Transverse colon (tissue), 4 donors: ENCODE measurements at regions of chrX and their contacts with region 1.

Region 1: DNA sequence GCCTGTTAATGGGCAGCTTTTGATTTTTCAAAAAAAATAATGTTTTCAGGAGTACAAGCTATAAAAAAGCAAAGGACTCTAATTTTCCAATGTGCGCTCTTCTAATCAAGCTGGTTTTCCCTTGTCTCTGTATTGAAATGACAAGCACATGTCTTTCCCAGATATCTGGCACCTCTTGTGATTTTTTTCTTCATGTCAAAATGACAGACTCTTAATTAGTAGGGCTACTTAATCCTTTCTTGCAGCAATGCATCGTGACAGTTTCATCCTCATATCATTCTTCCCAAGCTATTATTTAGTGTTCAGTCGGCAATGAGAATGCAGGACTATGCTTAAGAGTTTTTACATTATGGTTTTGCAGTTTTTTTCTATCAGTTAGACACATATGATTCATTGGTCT is 139.5 kb downstream of the MAGEC1 start:
- DNase-seq: no peak
- H3K4me3 ChIP-seq: no peak overlapping the region
- H3K27ac ChIP-seq: no peak overlapping the region
- H3K4me1 ChIP-seq: no peaks in the 10 kb centered on the region
- H3K27me3 ChIP-seq: no peaks in the 10 kb centered on the region
- CTCF ChIP-seq: no peak
- EP300 ChIP-seq: no peak
- POLR2A ChIP-seq: no peak

Region 2: GRCh38 chrX:141199169-141199568 is 844.0 kb before region 1 on chrX:
- in situ Hi-C with region 1: no loop called
- intact Hi-C with region 1: no loop called
- DNase-seq: no peak
- H3K4me3 ChIP-seq: no peak overlapping the region
- H3K27ac ChIP-seq: no peak overlapping the region
- H3K4me1 ChIP-seq: no peaks in the 10 kb centered on the region
- H3K27me3 ChIP-seq: no peaks in the 10 kb centered on the region
- CTCF ChIP-seq: no peak
- EP300 ChIP-seq: no peak
- POLR2A ChIP-seq: no peak

Region 3: DNA sequence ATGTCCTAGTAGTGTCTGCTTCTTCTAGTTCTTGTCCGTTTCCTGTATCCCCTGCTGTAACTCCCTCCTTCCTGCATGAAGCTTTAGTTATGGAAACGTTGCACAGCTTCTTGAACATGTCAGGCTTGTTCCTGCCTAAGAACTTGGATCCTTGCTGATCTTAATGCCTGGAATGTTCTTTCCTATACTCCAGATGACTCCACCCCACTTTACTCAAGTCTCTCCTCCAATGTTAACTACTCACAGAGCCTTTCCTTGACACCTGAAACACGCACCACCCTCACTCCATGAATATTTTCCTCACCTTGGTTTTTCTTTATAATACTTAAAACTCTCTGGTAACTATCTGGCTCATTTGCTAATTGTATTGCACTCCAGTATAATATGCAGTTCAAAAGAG is 185.7 kb before region 1 on chrX:
- in situ Hi-C with region 1: no loop called
- intact Hi-C with region 1: no loop called
- DNase-seq: no peak
- H3K4me3 ChIP-seq: no peak overlapping the region
- H3K27ac ChIP-seq: no peak overlapping the region
- H3K4me1 ChIP-seq: no peaks in the 10 kb centered on the region
- H3K27me3 ChIP-seq: no peaks in the 10 kb centered on the region
- CTCF ChIP-seq: no peak
- EP300 ChIP-seq: no peak
- POLR2A ChIP-seq: no peak

Region 4: GRCh38 chrX:141924293-141924692 is 118.9 kb before region 1 on chrX:
- in situ Hi-C with region 1: no loop called
- intact Hi-C with region 1: no loop called
- DNase-seq: no peak
- H3K4me3 ChIP-seq: no peak overlapping the region
- H3K27ac ChIP-seq: no peak overlapping the region
- H3K4me1 ChIP-seq: no peaks in the 10 kb centered on the region
- H3K27me3 ChIP-seq: no peaks in the 10 kb centered on the region
- CTCF ChIP-seq: no peak
- EP300 ChIP-seq: no peak
- POLR2A ChIP-seq: no peak

Region 5: DNA sequence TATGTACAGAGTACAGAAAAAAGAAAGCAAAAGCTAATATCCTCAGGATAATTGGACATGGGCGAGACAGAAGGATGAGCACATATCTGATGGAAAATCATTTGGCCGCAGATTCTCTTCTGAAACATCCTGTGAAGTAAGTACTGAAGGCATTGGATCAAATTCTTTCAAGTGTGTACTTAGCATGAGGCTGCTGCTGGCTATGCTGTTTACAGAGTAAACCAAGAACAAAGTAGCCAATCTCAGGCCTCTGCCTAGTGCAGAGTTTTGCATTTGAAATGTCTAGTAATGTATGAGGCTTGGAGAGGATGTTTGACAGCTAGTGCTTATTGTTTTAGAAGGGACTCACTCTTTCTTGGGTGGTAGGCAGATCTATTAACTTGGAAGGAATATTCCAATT is 33.4 kb after region 1 on chrX:
- in situ Hi-C with region 1: no loop called
- intact Hi-C with region 1: no loop called
- DNase-seq: no peak
- H3K4me3 ChIP-seq: no peak overlapping the region
- H3K27ac ChIP-seq: no peak overlapping the region
- H3K4me1 ChIP-seq: no peaks in the 10 kb centered on the region
- H3K27me3 ChIP-seq: no peaks in the 10 kb centered on the region
- CTCF ChIP-seq: no peak
- EP300 ChIP-seq: no peak
- POLR2A ChIP-seq: no peak

Region 6: GRCh38 chrX:142733327-142733726 is 690.1 kb after region 1 on chrX:
- in situ Hi-C with region 1: no loop called
- intact Hi-C with region 1: loop called (anchors 5 kb)
- DNase-seq: no peak
- H3K4me3 ChIP-seq: no peak overlapping the region
- H3K27ac ChIP-seq: no peak overlapping the region
- H3K4me1 ChIP-seq: no peaks in the 10 kb centered on the region
- H3K27me3 ChIP-seq: no peaks in the 10 kb centered on the region
- CTCF ChIP-seq: no peak
- EP300 ChIP-seq: no peak
- POLR2A ChIP-seq: no peak